ENCODE measurements at regions of chr1 and their contacts with region 1.

Region 1: GRCh38 chr1:77438236-77438913 is 156.6 kb downstream of the AK5 start:
- DNase-seq: no peak
- ATAC-seq: no peak
- H3K4me3 Mint-ChIP-seq: peak overlapping the region; percentile 27
- H3K27ac Mint-ChIP-seq: peak overlapping the region; percentile 88
- H3K4me1 Mint-ChIP-seq: peaks cover 35% of the 10 kb centered on the region
- H3K27me3 Mint-ChIP-seq: no peaks in the 10 kb centered on the region

Region 2: DNA sequence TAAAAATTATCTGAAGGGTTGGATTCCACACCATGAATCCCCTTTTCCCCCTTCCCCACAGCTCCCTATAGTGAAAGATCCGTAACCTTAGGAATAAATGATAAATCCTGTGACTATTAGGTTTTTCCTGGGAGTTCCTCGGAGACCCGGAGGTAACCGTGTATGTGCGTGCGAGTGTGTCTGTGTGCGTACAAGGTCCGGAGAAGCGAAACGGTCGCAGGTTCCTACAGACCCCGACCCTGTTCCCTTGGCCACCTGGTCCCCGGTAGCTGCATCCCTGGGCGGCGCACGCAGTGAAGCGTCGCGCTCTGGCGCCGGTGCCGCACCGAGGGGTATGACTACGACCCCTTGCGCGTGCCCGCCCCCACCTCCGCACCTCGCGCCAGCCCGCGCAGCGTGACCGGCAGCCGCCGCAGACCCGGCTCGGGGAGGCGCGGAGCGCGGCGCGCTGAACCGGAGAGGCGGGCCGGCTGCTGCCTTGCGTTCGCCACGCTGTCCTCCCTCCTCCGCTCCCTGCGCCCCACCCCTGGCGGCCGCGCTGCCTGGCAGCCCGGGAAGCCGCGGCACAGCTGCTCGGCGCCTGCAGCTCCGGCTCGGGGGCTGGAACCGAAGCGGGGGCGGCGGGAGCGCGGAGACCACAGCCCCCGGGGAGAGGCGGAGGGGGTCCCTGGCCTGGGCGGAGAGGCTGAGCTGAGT is 156.7 kb before region 1 on chr1 and contains the start of gene AK5:
- CTCF ChIA-PET with region 1: no interaction called
- POLR2A ChIA-PET with region 1: no interaction called
- intact Hi-C with region 1: loop called in 1 of 2 experiments (anchors 2 kb)
- DNase-seq: peak; percentile 75
- ATAC-seq: peak; percentile 77
- H3K4me3 Mint-ChIP-seq: peak within 1 kb of the TSS; percentile 70
- H3K27ac Mint-ChIP-seq: peak within 1 kb of the TSS; percentile 64
- H3K4me1 Mint-ChIP-seq: peaks cover 32% of the 10 kb centered on the region
- H3K27me3 Mint-ChIP-seq: no peaks in the 10 kb centered on the region
- total RNA-seq, gene AK5: 9.9 TPM

Region 3: DNA sequence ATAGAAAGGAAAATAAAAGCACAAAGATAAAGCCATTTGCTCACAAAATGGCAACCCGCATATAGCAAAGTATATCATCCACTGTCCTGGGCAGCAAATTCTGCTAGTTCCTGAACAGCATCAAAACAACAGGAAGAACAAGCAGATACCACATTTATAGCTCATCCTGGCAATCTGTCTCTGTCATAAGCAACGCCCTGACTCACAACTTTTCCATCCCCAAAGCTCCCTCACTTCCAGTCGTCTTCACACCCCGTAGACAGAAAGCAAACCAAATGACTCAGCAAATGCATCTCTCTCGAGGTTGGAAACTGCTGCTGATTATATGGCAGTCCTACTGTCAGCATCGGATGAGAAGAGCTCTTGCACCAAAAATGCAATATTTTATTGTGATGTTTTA is 90.7 kb before region 1 on chr1:
- CTCF ChIA-PET with region 1: no interaction called
- POLR2A ChIA-PET with region 1: no interaction called
- intact Hi-C with region 1: no loop called
- DNase-seq: peak; percentile 60
- ATAC-seq: peak; percentile 94
- H3K4me3 Mint-ChIP-seq: no peak overlapping the region
- H3K27ac Mint-ChIP-seq: peak overlapping the region; percentile 27
- H3K4me1 Mint-ChIP-seq: peaks cover 23% of the 10 kb centered on the region
- H3K27me3 Mint-ChIP-seq: no peaks in the 10 kb centered on the region

Region 4: DNA sequence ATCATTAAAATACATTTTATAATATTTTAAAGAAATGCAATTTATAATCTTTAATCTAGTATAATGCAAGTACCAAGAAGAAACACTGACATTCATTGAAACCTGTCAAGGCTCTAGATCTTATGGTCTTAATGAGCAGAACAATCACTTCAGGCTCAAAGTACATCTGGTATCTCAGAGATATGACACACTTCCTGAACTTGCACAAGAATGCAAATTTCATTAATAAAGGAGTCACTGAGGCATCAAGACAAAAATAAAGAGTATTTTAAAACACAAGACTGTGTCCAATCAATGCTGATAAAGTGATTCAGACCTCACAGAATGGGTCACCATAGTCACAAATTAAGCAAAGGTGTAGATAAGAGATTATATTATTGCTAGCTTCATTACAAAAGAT is 21.5 kb after region 1 on chr1:
- CTCF ChIA-PET with region 1: no interaction called
- POLR2A ChIA-PET with region 1: no interaction called
- intact Hi-C with region 1: no loop called
- DNase-seq: no peak
- ATAC-seq: no peak
- H3K4me3 Mint-ChIP-seq: no peak overlapping the region
- H3K27ac Mint-ChIP-seq: no peak overlapping the region
- H3K4me1 Mint-ChIP-seq: peaks cover 2% of the 10 kb centered on the region
- H3K27me3 Mint-ChIP-seq: no peaks in the 10 kb centered on the region